ENCODE measurements at regions of chr1 and their contacts with region 1.

Region 1: GRCh38 chr1:111990878-111991718 is 1.6 kb upstream of the KCND3 start:
- DNase-seq: peak; percentile 86 to 93
- ATAC-seq: peak; percentile 75
- H3K4me3 ChIP-seq: peak overlapping the region; percentile 7 to 75
- H3K27ac ChIP-seq: peak overlapping the region in 1 of 2 donors; percentile 23
- H3K4me1 ChIP-seq: peaks cover 0 to 4% of the 10 kb centered on the region in 2 donors
- H3K27me3 ChIP-seq: no peaks in the 10 kb centered on the region

Region 2: GRCh38 chr1:111789666-111790316 is 201.3 kb before region 1 on chr1:
- intact Hi-C with region 1: loop called in 1 of 2 experiments (anchors 5 kb)
- DNase-seq: no peak
- ATAC-seq: no peak
- H3K4me3 ChIP-seq: no peak overlapping the region
- H3K27ac ChIP-seq: no peak overlapping the region
- H3K4me1 ChIP-seq: no peaks in the 10 kb centered on the region
- H3K27me3 ChIP-seq: no peaks in the 10 kb centered on the region

Region 3: DNA sequence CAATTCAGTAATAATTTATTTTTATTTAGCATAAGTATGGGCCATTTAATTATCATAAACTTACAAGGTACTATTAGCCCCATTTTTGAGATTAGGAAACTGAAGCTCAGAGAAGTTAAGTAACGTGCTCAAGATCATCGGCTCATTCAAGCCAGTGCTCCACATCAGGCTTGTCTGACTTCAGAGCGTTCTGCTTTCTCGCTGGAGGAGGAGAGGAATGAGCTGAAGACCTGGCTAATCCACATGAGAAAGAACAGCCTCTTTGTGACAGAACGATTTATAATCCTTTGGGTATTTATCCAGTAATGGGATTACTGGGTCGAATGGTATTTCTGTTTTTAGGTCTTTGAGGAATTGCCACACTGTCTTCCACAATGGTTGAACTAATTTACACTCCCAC is 195.7 kb before region 1 on chr1:
- intact Hi-C with region 1: loop called (anchors 5 kb)
- DNase-seq: no peak
- ATAC-seq: no peak
- H3K4me3 ChIP-seq: no peak overlapping the region
- H3K27ac ChIP-seq: no peak overlapping the region
- H3K4me1 ChIP-seq: no peaks in the 10 kb centered on the region
- H3K27me3 ChIP-seq: no peaks in the 10 kb centered on the region

Region 4: DNA sequence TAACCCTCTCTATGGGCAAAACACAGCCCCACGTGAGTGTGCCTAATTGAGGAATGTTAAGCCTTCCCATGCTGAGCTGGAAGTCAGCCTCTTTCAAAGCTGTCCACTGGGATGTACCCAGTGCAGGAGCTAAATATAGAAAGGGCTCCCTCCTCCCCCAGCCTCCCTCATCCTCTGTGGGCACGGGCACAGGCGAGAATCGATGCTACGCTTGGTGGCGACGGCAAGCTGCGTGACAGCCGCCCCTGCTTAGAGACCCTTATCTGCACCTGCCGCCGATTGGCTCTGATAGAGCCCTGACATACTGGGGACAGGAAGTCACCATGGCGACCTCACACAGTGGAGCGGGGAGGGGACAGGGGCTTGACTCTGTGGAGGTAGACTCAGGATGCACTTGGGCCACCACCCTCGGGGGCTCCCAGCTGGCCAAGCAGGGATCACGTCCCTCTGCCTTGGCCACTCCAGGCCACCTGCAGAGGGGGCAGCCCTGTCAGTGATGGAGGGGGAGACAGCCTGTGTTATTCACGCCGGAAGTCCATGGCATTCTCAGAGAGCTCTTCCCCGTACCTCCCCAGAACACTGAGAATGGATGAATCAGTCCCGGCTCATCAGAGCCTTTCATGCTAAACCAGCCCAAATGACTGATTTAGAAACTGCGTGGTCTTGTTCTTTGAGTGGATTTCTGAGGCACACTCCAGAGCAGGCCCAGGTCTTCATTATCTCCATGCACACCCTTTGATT is 86.5 kb before region 1 on chr1:
- intact Hi-C with region 1: loop called in 1 of 2 experiments (anchors 10 kb)
- DNase-seq: no peak
- ATAC-seq: no peak
- H3K4me3 ChIP-seq: no peak overlapping the region
- H3K27ac ChIP-seq: no peak overlapping the region
- H3K4me1 ChIP-seq: no peaks in the 10 kb centered on the region
- H3K27me3 ChIP-seq: no peaks in the 10 kb centered on the region

Region 5: GRCh38 chr1:111920221-111921024 is 70.7 kb before region 1 on chr1:
- intact Hi-C with region 1: loop called (anchors 2 to 5 kb)
- DNase-seq: peak; percentile 70 to 82
- ATAC-seq: peak; percentile 81
- H3K4me3 ChIP-seq: no peak overlapping the region
- H3K27ac ChIP-seq: peak overlapping the region; percentile 2 to 85
- H3K4me1 ChIP-seq: no peaks in the 10 kb centered on the region
- H3K27me3 ChIP-seq: no peaks in the 10 kb centered on the region